ENCODE measurements at regions of chr2 and their contacts with region 1.

Region 1: GRCh38 chr2:45412754-45413379 is 198.2 kb downstream of the SRBD1 start:
- DNase-seq: no peak
- H3K4me3 ChIP-seq: no peak overlapping the region
- H3K27ac ChIP-seq: no peak overlapping the region
- H3K4me1 ChIP-seq: no peaks in the 10 kb centered on the region
- H3K27me3 ChIP-seq: no peaks in the 10 kb centered on the region
- CTCF ChIP-seq: no peak
- POLR2A ChIP-seq: no peak

Region 2: DNA sequence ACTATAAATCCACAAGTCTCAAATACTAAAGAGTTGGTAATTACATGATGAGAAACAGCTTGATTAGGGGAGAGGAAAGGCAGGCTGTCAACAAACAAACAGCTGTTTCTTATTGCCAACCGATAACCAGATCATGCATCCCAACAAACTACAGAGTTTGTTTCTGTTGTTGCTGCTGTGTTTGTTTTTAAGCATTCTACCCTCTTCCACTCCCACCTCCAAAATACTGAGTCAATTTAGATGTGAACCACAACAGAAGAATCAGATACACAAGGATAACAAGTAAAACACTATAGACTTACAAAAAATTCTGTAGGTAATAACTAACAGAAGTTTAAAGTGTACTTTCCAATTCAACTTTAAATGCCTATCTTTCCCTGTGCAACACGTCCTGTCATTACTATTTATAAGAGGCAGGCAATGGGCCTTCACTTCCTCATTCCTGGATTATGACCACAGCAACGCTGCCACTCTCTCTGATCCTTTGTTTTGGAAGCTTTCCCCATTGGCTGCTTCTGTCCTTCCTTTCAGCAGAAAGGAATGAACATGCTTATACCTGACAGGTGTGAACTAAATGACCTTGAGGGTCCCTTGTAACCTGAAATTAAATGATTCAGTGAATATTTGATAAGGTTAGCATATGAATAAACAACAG is 46.2 kb after region 1 on chr2:
- intact Hi-C with region 1: loop called (anchors 5 kb)
- DNase-seq: peak; percentile 63
- H3K4me3 ChIP-seq: no peak overlapping the region
- H3K27ac ChIP-seq: no peak overlapping the region
- H3K4me1 ChIP-seq: no peaks in the 10 kb centered on the region
- H3K27me3 ChIP-seq: no peaks in the 10 kb centered on the region
- CTCF ChIP-seq: no peak
- POLR2A ChIP-seq: no peak

Measured in prostate gland (tissue), 2 donors.